Naive thymus-derived CD4-positive, alpha-beta T cell (primary cell): ENCODE measurements at regions of chr2 and their contacts with region 1.

Region 1: DNA sequence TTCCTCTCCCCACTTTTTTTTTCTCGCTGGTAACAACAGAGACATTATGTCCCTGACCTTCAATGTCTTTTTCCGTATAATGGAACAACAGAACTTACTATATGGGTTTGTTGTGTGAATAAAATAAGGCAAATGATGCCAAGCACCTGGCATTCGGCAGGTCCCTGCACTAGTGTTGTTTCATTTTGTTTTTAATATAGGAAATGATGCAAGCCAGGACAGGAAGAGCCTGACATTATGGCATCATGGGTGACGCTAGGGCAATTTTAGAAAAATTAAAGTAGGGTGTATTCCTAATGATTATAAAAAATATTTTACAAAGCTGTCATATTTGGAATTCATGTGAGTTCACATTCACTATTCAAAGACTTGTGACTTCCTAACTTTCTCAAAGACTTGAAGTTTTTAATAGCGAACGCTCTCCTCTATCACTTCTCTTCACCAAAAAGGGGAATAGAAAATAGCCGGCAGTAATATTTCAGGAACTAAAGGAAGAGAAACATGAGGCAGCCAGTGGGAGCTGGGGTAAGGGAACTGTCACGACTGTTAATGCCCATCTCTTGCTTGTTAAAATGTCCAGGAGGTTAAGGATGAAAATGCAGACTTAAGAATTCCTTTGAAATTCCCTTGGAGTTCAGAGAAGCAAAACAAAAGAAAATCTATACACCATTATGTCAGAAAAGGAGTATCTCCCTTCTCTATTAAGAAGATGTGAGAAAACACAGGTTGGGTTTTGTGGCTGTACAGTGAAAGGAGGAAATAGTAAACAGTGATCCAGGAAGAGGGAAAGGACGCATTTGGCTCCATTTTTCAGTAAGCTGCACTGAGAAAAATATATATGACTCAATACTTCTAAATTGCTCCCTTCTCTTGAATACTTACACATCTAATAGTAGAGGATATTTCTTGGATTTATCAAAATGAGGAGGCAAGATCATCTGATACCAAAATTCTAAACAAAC is 60.2 kb downstream of the DPP4 start:
- DNase-seq: peak in 7 of 9 donors; percentile 30 to 71 (median 55)
- ATAC-seq: peak; percentile 36
- H3K4me3 ChIP-seq: peak overlapping the region; percentile 11
- H3K4me3 Mint-ChIP-seq: peak overlapping the region; percentile 52 to 86 (median 70)
- H3K27ac ChIP-seq: peak overlapping the region; percentile 95
- H3K27ac Mint-ChIP-seq: peak overlapping the region; percentile 94 to 99 (median 98)
- H3K4me1 ChIP-seq: peaks cover 47 to 72% of the 10 kb centered on the region in 2 donors
- H3K4me1 Mint-ChIP-seq: peaks cover 41 to 86% (median 81%) of the 10 kb centered on the region in 7 donors
- H3K27me3 ChIP-seq: no peaks in the 10 kb centered on the region
- H3K27me3 Mint-ChIP-seq: no peaks in the 10 kb centered on the region

Region 2: GRCh38 chr2:161136696-161137324 is 877.0 kb before region 1 on chr2:
- CTCF ChIA-PET with region 1: no interaction called
- POLR2A ChIA-PET with region 1: no interaction called
- intact Hi-C with region 1: loop called in 1 of 2 experiments (anchors 5 kb)
- DNase-seq: peak in 6 of 9 donors; percentile 31 to 76 (median 48)
- ATAC-seq: peak; percentile 94
- H3K4me3 ChIP-seq: peak overlapping the region; percentile 67
- H3K4me3 Mint-ChIP-seq: peak overlapping the region; percentile 68 to 98 (median 91)
- H3K27ac ChIP-seq: peak overlapping the region; percentile 83
- H3K27ac Mint-ChIP-seq: peak overlapping the region; percentile 89 to 99 (median 95)
- H3K4me1 ChIP-seq: peaks cover 21 to 27% of the 10 kb centered on the region in 2 donors
- H3K4me1 Mint-ChIP-seq: peaks cover 23 to 71% (median 58%) of the 10 kb centered on the region in 7 donors
- H3K27me3 ChIP-seq: no peaks in the 10 kb centered on the region
- H3K27me3 Mint-ChIP-seq: no peaks in the 10 kb centered on the region

Region 3: GRCh38 chr2:162029287-162029901 is 15.6 kb after region 1 on chr2:
- CTCF ChIA-PET with region 1: interaction called, 5 read pairs
- POLR2A ChIA-PET with region 1: interaction called, 52 read pairs
- intact Hi-C with region 1: no loop called
- DNase-seq: no peak
- ATAC-seq: no peak
- H3K4me3 ChIP-seq: no peak overlapping the region
- H3K4me3 Mint-ChIP-seq: no peak overlapping the region
- H3K27ac ChIP-seq: no peak overlapping the region
- H3K27ac Mint-ChIP-seq: peak overlapping the region in 7 of 9 donors; percentile 19 to 70 (median 46)
- H3K4me1 ChIP-seq: peaks cover 0 to 7% of the 10 kb centered on the region in 2 donors
- H3K4me1 Mint-ChIP-seq: peaks cover 5 to 45% (median 32%) of the 10 kb centered on the region in 7 donors
- H3K27me3 ChIP-seq: no peaks in the 10 kb centered on the region
- H3K27me3 Mint-ChIP-seq: no peaks in the 10 kb centered on the region

Region 4: DNA sequence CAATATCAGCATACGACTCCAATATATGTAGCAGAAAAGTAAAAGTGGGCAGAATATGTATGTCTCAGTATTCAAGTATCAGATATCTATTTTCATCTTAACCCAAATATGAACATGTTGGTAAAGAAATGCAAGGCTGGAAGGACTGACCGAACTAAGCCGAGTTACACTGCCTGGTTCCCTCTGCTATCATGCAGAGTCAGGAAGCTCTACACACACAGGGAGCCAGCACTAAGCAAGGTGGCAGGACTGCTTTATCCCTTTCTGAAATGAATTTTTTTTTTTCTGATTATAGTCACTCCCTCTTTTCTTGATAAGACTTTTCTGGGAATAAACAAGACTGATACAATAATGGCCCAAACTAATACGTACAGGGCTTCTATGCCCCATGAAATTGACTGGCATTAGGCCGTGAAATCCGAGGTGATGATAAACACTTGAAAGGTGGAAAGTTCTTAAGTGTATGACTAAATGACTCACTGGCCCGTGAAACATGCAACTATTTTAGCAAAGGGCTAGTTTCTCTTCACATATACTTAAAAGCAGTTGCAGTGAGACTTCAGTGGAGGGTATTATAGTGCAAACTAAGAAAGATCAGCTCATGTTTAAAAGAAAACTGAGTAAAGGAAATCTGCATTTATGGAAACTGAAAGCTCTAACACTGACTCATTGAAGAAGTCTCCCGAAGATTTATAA is 45.3 kb after region 1 on chr2:
- CTCF ChIA-PET with region 1: interaction called, 3 read pairs
- POLR2A ChIA-PET with region 1: interaction called, 5 read pairs
- intact Hi-C with region 1: loop called (anchors 1 kb)
- DNase-seq: no peak
- ATAC-seq: peak; percentile 33
- H3K4me3 ChIP-seq: peak overlapping the region; percentile 48
- H3K4me3 Mint-ChIP-seq: peak overlapping the region; percentile 64 to 83 (median 76)
- H3K27ac ChIP-seq: peak overlapping the region; percentile 39
- H3K27ac Mint-ChIP-seq: peak overlapping the region; percentile 45 to 91 (median 84)
- H3K4me1 ChIP-seq: peaks cover 35 to 42% of the 10 kb centered on the region in 2 donors
- H3K4me1 Mint-ChIP-seq: peaks cover 32 to 92% (median 88%) of the 10 kb centered on the region in 7 donors
- H3K27me3 ChIP-seq: no peaks in the 10 kb centered on the region
- H3K27me3 Mint-ChIP-seq: no peaks in the 10 kb centered on the region

Region 5: DNA sequence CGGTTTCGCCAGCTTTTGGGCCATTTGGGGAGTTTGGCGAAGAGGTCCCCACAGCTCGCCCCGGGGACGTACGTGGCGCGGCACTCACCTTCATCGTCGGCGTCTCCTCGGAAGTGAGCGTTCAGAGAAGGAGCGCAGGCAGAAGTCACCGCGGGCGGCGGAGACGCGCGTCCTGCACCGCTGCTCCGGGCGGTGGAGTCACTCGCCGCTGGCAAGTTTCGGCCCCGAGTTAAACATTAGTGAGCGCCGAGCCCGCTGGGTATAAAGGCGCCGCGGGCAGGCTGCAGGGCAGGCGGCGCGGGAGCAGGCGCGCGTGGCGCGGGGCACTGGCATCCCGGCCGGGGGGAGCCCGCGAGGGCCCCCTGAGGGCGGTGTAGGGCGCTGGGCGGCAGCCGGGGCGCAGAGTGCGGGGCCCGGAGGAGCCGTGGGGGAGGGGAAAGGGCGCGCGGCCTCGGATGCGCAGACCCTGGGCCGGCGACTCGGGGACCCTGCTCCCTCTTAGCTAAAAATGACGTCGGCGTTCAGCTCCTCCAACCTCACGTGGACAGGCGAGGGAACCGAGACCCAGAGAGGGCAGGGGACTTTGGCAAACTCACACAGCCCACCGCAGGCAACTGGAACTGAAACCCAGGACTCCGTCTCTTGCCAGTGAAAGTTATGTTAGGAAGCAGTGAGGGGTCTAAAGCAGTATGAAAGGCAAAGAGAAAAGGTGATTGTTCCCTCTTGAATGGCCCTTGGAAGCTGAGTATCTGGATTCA is 60.3 kb after region 1 on chr2 and contains the start of gene DPP4:
- CTCF ChIA-PET with region 1: interaction called, 19 read pairs
- POLR2A ChIA-PET with region 1: interaction called, 18 read pairs
- intact Hi-C with region 1: loop called (anchors 1 kb)
- DNase-seq: peak; percentile 31 to 68 (median 61)
- ATAC-seq: peak; percentile 88
- H3K4me3 ChIP-seq: peak within 1 kb of the TSS; percentile 95
- H3K4me3 Mint-ChIP-seq: peak within 1 kb of the TSS; percentile 92 to 100 (median 98)
- H3K27ac ChIP-seq: peak within 1 kb of the TSS; percentile 84
- H3K27ac Mint-ChIP-seq: peak within 1 kb of the TSS; percentile 86 to 98 (median 94)
- H3K4me1 ChIP-seq: peaks cover 0 to 28% of the 10 kb centered on the region in 2 donors
- H3K4me1 Mint-ChIP-seq: peaks cover 30 to 60% (median 52%) of the 10 kb centered on the region in 7 donors
- H3K27me3 ChIP-seq: no peaks in the 10 kb centered on the region
- H3K27me3 Mint-ChIP-seq: peaks cover 0 to 5% (median 0%) of the 10 kb centered on the region in 5 donors
- total RNA-seq, gene DPP4: 35.7 to 188 (median 41.6) TPM

Region 6: DNA sequence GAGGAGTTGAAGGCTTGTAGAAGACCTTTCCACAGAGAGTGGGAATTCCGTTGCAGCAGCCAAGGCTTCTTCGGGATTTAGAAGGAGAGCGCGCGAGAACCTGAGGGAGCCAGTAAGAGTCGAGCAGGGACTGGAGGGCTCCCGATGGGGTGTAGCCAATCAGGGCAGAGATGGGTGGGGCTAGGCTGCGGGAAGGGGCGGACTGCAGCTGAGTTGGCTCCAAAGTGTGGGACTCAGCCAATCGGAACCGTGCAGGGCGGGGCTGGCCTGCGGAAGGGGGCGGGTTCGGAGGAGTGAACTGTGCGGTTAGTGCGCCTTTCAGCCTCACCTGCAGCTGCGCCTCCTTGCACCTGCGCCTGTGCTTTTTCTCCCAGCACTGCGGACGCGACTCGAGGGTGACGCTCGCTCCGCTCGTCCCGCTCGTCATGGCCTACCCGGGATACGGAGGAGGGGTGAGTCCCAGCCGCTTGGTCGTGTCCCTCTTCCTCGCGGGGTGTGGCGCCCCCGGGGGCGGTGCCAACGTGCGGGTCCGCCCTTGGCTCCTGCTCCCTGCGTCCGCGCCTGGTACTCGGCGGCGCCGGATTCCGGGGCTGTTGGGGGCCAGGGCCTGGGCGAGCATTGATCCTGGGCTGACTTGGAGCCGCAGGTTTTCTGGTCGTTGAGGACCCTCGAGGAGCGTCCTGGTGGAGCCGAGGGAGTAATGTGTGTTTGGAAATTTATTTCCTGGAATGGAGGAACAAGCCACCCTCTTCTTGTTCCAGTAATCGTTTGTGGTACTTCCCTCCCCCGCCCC is 330.2 kb after region 1 on chr2 and contains the start of gene GCA:
- CTCF ChIA-PET with region 1: interaction called, 3 read pairs
- POLR2A ChIA-PET with region 1: no interaction called
- intact Hi-C with region 1: loop called in 1 of 2 experiments (anchors 5 kb)
- DNase-seq: peak; percentile 96 to 99 (median 98)
- ATAC-seq: peak; percentile 99
- H3K4me3 ChIP-seq: peak within 1 kb of the TSS; percentile 87
- H3K4me3 Mint-ChIP-seq: peak within 1 kb of the TSS; percentile 78 to 96 (median 91)
- H3K27ac ChIP-seq: peak within 1 kb of the TSS; percentile 53
- H3K27ac Mint-ChIP-seq: peak within 1 kb of the TSS; percentile 70 to 92 (median 81)
- H3K4me1 ChIP-seq: peaks cover 4 to 5% of the 10 kb centered on the region in 2 donors
- H3K4me1 Mint-ChIP-seq: peaks cover 0 to 21% (median 19%) of the 10 kb centered on the region in 7 donors
- H3K27me3 ChIP-seq: no peaks in the 10 kb centered on the region
- H3K27me3 Mint-ChIP-seq: peaks cover 0 to 9% (median 0%) of the 10 kb centered on the region in 5 donors
- total RNA-seq, gene GCA: 10.9 to 56.3 (median 13.4) TPM